GM18951 (cell line): ENCODE measurements at regions of chr6 and their contacts with region 1.

Region 1: GRCh38 chr6:81752138-81752920 is at the start of gene TENT5A:
- POLR2A ChIP-seq: peak; percentile 84

Region 2: GRCh38 chr6:80214436-80215022 is 1537.8 kb before region 1 on chr6:
- in situ Hi-C with region 1: loop called (anchors 25 kb)
- POLR2A ChIP-seq: no peak

Region 3: GRCh38 chr6:81515562-81516453 is 236.5 kb before region 1 on chr6:
- in situ Hi-C with region 1: no loop called
- POLR2A ChIP-seq: no peak